Dendritic cell treated with granulocyte-macrophage colony-stimulating factor and Interleukin-4, amounts not matched to agents 40 ng/mL and 50 ng/mL, for 4 days (primary cell): ENCODE measurements at regions of chr10 and their contacts with region 1.

Region 1: GRCh38 chr10:22010973-22011408 is 7.5 kb upstream of the DNAJC1 start:
- H3K4me3 Mint-ChIP-seq: no peak overlapping the region
- H3K27ac Mint-ChIP-seq: no peak overlapping the region
- H3K4me1 Mint-ChIP-seq: peaks cover 11% of the 10 kb centered on the region
- H3K27me3 Mint-ChIP-seq: no peaks in the 10 kb centered on the region

Region 2: DNA sequence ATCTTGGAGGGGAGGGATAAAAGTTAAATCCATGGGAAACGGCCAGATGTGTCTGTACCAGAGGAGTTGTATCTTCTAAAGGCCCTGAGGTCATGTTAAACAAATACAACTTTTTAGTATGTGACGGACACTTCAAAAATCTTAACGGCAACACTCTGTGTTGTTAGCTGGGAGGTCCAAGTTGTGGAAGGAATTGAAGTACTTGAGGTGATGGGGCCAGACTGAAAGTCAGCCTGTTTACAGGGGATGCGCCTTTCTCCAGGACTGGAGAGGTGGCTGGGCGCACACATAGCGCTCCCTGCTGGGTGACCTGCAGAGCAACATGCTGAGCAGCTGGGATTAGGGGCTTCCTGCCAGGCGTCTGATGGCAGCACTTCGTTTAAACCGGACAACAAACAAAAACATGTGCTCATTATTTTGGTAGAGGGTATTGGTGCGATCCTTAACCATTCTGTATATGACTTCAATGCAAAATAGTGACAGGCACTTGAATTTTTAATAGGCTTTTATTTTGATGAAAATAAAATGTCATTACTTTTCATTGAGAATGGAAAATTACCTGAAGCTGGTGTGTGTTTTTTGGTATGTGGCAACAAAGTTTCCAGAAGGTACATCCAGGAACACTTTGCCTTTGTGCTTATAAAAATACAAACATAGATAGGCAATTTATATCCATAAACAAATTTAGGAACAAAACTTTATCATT is 278.8 kb before region 1 on chr10:
- intact Hi-C with region 1: no loop called
- H3K4me3 Mint-ChIP-seq: no peak overlapping the region
- H3K27ac Mint-ChIP-seq: no peak overlapping the region
- H3K4me1 Mint-ChIP-seq: peaks cover 7% of the 10 kb centered on the region
- H3K27me3 Mint-ChIP-seq: no peaks in the 10 kb centered on the region

Region 3: GRCh38 chr10:21926949-21927348 is 84.0 kb before region 1 on chr10:
- intact Hi-C with region 1: no loop called
- H3K4me3 Mint-ChIP-seq: no peak overlapping the region
- H3K27ac Mint-ChIP-seq: no peak overlapping the region
- H3K4me1 Mint-ChIP-seq: no peaks in the 10 kb centered on the region
- H3K27me3 Mint-ChIP-seq: no peaks in the 10 kb centered on the region

Region 4: DNA sequence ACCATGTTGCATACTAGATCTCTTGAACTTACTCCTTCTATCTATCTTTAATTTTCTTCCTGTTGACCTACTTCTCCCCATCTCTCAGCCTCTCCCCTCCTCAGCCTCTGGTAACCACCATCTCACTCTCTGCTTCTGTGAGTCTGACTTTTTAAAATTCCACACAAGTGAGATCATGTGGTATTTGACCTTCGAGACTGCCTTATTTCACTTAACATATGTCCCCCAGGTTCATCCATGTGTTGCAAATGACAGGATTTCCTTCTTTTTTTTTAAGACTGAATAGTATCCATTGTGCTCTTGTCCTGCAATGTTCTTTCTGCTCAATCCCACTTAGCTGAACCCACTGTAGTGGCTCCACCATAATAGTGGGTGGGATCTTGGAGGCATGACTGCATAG is 44.0 kb after region 1 on chr10:
- intact Hi-C with region 1: no loop called
- H3K4me3 Mint-ChIP-seq: no peak overlapping the region
- H3K27ac Mint-ChIP-seq: no peak overlapping the region
- H3K4me1 Mint-ChIP-seq: no peaks in the 10 kb centered on the region
- H3K27me3 Mint-ChIP-seq: no peaks in the 10 kb centered on the region

Region 5: GRCh38 chr10:22391600-22391999 is 380.6 kb after region 1 on chr10:
- intact Hi-C with region 1: no loop called
- H3K4me3 Mint-ChIP-seq: no peak overlapping the region
- H3K27ac Mint-ChIP-seq: no peak overlapping the region
- H3K4me1 Mint-ChIP-seq: no peaks in the 10 kb centered on the region
- H3K27me3 Mint-ChIP-seq: peaks cover 3% of the 10 kb centered on the region

Region 6: DNA sequence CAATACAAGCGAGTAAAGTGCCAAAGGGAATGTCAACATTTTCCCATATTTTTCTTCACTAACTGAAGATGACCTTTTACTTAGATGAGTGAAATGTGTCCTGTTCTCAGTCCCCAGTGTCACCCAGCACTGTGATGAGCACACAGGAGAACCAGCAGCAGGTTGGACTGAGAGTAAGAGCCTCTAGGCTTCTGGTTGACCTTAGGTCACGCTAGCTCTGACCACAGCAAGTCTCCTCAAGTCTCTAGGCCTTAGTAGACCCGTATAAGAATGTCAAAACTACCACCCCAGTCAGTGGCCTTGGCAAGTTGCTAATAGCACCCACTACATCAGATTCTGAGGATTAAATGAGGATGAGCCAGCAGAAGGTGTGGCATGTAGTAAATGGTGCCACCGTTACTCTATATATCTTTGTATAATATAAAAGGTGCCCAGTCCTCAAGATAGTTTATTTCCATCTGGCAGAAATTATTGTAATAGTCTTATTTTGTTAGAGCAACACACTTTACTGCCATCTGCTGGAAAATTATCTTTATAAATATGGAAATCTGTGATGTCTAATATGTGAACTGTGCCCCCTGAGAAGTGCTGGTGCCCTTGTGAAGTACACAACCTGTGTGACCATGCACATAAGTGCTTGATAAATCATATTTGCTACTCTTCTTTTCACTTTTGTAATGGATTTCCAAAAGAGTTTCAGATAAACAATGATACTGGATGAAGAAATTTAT is 410.0 kb after region 1 on chr10:
- intact Hi-C with region 1: loop called (anchors 5 kb)
- H3K4me3 Mint-ChIP-seq: no peak overlapping the region
- H3K27ac Mint-ChIP-seq: no peak overlapping the region
- H3K4me1 Mint-ChIP-seq: peaks cover 13% of the 10 kb centered on the region
- H3K27me3 Mint-ChIP-seq: no peaks in the 10 kb centered on the region